ENCODE measurements at regions of chr1 and their contacts with region 1.

Region 1: DNA sequence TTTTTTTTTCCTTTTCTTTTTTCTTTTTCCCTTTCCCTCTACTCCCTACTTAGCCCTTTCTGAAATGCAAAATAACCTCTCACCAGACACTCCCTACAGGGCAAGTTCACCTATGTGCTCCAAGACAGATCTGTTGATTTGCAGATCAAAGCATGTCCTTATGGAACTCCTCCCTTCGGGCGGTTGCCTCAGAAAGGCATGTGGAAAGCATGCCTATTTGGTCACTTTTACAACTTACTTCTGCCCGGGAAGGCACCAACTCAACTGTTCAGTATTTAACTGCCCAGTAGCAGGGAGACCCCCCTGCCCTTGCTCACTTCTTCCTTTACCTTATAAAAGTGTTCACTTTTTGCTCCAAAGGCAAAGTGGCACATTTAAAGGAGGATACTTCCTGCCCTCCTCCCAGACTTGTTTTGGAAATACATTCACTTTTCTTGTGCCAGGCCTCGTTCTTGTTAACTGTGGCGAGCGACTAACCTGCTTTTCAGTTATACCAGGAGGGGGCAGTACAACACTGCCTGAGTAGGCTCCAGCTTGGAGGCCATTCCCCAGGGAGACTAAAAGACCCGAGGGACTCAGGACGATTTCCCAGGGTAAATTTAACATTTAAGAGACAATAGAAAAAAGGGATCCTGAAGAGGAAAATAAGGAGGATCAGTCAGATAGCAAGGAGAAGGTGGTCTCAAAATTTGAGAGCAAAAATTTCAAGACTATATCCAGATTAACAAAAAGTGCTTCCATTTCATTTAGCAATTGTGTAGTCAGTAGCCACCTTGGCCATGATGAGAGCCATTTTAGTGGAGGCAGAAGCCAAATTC is 12.3 kb upstream of the SLAMF7 start:
- DNase-seq: peak; percentile 62
- CTCF ChIP-seq: peak; percentile 80

Region 2: DNA sequence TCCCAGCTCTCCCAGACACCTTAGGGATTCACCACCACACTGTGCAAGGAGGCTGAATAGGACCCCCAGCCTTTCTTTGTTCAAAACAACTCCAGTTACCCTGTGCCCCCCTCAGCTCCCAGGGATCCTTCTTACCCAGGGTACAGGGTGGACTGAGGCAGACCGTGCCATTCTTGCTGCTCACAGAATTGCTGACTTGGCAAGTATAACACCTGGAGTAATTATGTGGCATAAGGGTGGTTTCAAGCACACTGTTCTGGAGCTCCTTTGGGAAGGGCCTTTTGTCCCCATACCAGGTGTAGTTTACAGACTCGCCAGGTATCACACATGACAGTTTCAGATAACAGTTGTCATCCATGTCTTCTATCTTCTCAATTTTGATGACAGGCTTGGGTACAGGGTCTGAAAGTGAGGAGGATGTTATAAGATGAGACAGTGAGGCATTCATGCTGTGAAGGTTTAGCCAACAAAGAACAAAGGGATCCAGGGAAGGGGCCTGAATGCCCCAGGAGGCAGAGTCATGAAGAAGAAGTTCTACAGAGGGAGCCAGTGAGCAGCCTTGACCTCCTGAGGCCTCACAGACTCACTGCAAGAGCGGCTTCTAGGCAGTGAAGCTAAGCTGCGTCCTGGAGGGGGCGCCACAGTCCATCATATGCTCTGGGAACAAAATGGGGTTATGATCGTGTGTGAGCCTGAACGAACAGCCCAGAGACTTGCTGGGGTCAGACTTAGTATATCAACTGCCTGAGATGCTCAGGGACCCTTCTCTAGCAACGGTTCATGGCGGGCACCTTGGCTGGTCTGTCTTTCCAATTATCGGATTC is 45.4 kb before region 1 on chr1:
- CTCF ChIA-PET with region 1: interaction called, 50 read pairs
- POLR2A ChIA-PET with region 1: no interaction called
- DNase-seq: peak; percentile 55
- CTCF ChIP-seq: peak; percentile 93

Region 3: DNA sequence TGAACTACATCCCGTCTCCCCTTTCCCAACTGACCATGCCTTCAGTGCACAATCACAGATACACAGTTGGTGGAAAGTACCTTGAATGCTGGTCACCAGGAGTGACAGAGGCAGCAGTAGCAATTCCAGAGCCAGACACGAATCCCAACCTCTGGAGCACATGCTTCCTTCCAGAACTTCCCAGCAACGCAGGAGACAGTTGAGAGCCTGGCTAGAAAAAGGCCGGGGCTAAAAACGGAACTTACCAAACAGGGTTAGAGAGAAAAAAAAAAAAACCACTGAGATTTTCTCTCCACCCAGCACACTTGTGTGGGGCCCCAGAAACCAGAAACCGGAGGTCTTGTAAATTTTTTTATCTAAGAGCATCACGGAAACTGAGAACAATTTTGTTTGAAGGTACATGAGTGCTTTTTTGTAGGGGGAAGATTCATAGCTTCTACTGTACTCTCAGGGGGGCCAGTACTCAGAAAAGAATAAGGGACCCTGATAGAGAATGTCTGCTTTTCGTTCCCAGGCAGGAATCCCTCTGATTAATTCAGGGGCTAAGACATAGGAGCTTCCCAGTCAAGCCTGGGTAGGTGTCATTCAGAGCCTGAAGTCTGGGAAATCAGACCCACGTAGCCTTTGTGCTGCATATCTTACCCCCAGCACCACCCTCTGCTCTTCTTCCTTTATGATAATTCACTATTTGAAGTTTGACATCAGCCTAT is 14.9 kb before region 1 on chr1 and contains the start of gene CD48:
- CTCF ChIA-PET with region 1: interaction called, 120 read pairs
- POLR2A ChIA-PET with region 1: interaction called, 6 read pairs
- DNase-seq: peak; percentile 54
- CTCF ChIP-seq: no peak

Region 4: GRCh38 chr1:160739098-160739511 is 12.4 kb after region 1 on chr1 and contains the start of gene SLAMF7:
- CTCF ChIA-PET with region 1: interaction called, 21 read pairs
- POLR2A ChIA-PET with region 1: interaction called, 5 read pairs
- DNase-seq: peak; percentile 52
- CTCF ChIP-seq: no peak

Region 5: GRCh38 chr1:160830321-160831153 is 103.8 kb after region 1 on chr1:
- CTCF ChIA-PET with region 1: interaction called, 12 read pairs
- POLR2A ChIA-PET with region 1: no interaction called
- DNase-seq: peak; percentile 65
- CTCF ChIP-seq: peak; percentile 72

Region 6: GRCh38 chr1:161038523-161039153 is 311.9 kb after region 1 on chr1 and contains the start of gene TSTD1:
- CTCF ChIA-PET with region 1: no interaction called
- POLR2A ChIA-PET with region 1: no interaction called
- DNase-seq: peak; percentile 92
- CTCF ChIP-seq: no peak